ENCODE measurements at regions of chr16 and their contacts with region 1.

Region 1: DNA sequence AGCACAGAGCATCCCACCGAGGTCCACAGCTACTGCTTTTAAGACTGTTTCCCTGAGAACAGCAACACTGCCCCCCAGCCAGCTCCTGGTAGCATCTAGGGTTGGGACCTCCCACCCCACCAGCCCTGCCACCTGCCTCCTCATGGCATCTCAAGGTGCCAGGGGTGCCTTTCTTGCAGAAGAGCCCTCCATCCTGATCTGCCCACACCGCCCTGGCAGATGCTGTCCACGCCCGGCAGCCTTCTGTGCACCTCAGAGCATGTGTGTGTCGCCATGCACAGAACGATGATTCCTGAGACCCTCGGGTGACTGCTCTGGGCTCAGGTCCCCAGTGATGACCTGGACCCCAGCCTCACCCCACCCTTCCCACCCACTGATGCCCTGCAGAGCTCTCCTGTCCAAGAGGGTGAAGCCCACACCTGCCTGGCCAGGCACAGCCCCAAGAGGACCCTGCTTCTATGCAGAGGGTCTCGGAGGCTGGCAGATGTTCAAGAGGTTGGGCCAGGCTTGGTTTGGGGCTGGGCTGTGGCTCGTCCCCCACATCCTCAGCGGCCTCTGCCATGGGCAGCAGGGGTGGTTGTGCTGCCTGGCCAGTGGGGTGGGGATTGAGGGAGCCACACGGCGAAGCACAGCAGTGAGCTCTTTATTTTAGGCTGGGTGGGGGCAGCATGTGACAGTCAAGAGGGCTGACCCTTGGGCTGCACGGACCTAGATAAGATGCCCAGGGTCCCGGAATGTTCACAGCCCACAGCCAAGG is 5.2 kb upstream of the SPATA2L start:
- DNase-seq: no peak
- H3K4me3 Mint-ChIP-seq: no peak overlapping the region
- H3K27ac Mint-ChIP-seq: no peak overlapping the region
- H3K4me1 Mint-ChIP-seq: peaks cover 10% of the 10 kb centered on the region
- H3K27me3 Mint-ChIP-seq: no peaks in the 10 kb centered on the region

Region 2: GRCh38 chr16:89793955-89794354 is 87.3 kb after region 1 on chr16:
- intact Hi-C with region 1: loop called (anchors 1 kb)
- DNase-seq: no peak
- H3K4me3 Mint-ChIP-seq: no peak overlapping the region
- H3K27ac Mint-ChIP-seq: no peak overlapping the region
- H3K4me1 Mint-ChIP-seq: peaks cover 1% of the 10 kb centered on the region
- H3K27me3 Mint-ChIP-seq: no peaks in the 10 kb centered on the region

Measured in activated CD4-positive, alpha-beta T cell treated with anti-CD3 and anti-CD28 coated beads, Interleukin-2, amount 10 ng/mL, durations not matched to agents 24 days and 14 days (primary cell).